Right ventricle myocardium inferior (tissue), 1 donor: ENCODE measurements at regions of chr20 and their contacts with region 1.

Region 1: DNA sequence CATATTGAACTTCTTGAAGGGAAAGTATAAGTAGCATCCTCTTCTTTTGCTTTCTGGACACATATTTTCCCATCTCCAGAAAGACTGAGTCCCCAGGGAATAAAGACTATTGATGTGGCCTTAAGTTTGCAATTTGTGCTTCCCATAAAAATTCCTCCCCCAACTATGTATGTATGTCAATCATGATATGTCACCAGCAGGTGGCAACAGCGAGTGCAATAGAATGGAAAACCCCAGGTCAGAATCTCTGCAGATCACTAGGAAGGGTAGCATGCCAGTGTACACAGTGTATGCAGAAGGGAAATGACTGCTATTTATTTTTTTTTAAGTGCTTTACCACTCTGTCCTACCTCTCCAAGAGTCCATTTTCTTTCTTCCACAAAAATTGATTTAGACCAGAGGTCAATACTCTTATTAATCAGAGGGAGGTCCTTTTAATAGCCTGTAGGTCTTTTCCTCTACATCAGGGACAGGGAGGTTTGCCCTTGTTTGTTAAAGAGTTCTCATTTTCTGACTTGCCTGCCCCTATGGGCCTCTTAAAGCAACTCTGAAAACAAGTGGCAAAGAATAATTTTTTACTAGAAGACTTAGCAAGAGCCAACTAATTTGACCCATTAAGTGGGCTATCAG is 61.4 kb downstream of the BMP2 start:
- DNase-seq: no peak
- ATAC-seq: peak; percentile 64

Region 2: GRCh38 chr20:6863798-6864201 is 34.9 kb after region 1 on chr20:
- intact Hi-C with region 1: no loop called
- DNase-seq: no peak
- ATAC-seq: no peak

Region 3: DNA sequence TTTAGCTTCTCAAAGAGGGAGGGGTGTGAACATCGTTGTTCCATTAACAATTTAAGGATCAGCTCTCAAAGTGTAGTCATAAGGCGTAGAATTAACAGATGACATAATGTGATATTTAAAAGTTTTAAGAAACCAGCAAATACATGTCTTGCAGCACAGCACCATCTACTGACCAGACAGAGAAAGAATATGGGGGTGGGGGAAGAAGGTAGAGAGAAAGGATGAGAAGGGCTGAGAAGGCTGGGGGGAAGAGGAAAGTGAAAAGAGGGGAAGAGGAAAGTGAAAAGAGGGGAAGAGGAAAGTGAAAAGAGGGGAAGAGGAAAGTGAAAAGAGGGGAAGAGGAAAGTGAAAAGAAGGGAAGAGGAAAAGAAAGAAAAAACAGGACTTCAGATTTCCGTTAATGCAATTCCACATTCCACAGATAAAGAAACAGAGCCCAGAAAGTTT is 1030.5 kb after region 1 on chr20:
- intact Hi-C with region 1: loop called (anchors 10 kb)
- DNase-seq: no peak
- ATAC-seq: no peak